ENCODE measurements at regions of chr16 and their contacts with region 1.

Region 1: DNA sequence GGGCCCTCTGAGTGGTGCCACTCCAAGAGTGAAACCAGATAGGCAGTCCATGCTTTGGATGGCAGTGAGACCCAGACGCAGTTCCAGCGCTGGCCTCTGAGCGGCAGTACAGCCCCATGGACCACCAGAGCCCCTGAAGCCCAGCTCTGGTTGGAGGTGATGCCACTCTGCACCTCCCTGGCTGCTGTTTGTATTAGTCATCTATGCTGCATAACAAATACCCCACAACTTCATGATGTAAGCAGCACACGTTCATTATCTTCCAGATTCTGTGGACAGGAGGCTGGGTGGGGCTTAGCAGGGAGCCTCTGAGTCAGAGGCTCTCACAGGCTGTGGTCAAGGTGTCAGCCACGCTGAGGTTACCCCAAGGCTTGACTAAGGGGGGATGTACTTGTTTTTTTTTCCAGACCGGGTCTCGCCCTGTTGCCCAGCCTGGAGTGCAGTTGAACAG is 5.1 kb upstream of the NME4 start:
- DNase-seq: peak in 1 of 2 donors; percentile 55
- ATAC-seq: peak in 1 of 2 donors; percentile 79
- H3K4me3 ChIP-seq: no peak overlapping the region
- H3K27ac ChIP-seq: no peak overlapping the region
- H3K4me1 ChIP-seq: peaks cover 8 to 10% of the 10 kb centered on the region in 2 donors
- H3K27me3 ChIP-seq: no peaks in the 10 kb centered on the region
- CTCF ChIP-seq: peak; percentile 54 to 83 (median 73)
- POLR2A ChIP-seq: no peak

Region 2: DNA sequence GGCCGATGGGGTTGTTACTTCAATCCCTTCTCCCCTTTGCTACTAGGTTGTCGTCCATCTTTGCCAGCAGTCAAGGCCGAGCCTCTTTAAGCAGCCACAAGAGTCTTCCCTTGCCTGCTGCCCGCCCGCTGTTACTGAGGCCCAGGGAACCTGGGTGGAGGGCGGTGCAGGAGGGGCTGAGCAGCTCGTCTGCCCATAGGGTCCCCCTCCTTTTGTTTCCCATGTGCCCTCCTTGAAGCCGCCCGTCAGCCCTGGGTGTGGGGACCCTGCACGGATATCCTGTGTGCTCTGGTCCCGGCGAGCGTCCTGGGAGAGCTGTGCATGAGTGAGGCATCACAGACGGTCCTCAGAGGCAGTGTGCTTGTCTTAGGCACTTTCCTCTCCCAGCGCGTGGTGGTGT is 97.7 kb after region 1 on chr16:
- in situ Hi-C with region 1: no loop called
- intact Hi-C with region 1: loop called (anchors 5 kb)
- DNase-seq: no peak
- ATAC-seq: no peak
- H3K4me3 ChIP-seq: no peak overlapping the region
- H3K27ac ChIP-seq: no peak overlapping the region
- H3K4me1 ChIP-seq: no peaks in the 10 kb centered on the region
- H3K27me3 ChIP-seq: no peaks in the 10 kb centered on the region
- CTCF ChIP-seq: no peak
- POLR2A ChIP-seq: no peak

Region 3: GRCh38 chr16:508884-509736 is 117.2 kb after region 1 on chr16:
- in situ Hi-C with region 1: no loop called
- intact Hi-C with region 1: no loop called
- DNase-seq: no peak
- ATAC-seq: peak in 1 of 2 donors; percentile 46
- H3K4me3 ChIP-seq: no peak overlapping the region
- H3K27ac ChIP-seq: no peak overlapping the region
- H3K4me1 ChIP-seq: no peaks in the 10 kb centered on the region
- H3K27me3 ChIP-seq: no peaks in the 10 kb centered on the region
- CTCF ChIP-seq: no peak
- POLR2A ChIP-seq: no peak

Measured in gastrocnemius medialis (tissue), 4 donors.